ENCODE measurements at regions of chr12 and their contacts with region 1.

Region 1: GRCh38 chr12:8890313-8891085 is 23.8 kb upstream of the PHC1 start:
- H3K4me3 ChIP-seq: peak overlapping the region; percentile 39
- H3K27ac ChIP-seq: no peak overlapping the region
- H3K4me1 ChIP-seq: no peaks in the 10 kb centered on the region
- CTCF ChIP-seq: peak; percentile 52; the same call in 1 of the 2 replicates

Region 2: DNA sequence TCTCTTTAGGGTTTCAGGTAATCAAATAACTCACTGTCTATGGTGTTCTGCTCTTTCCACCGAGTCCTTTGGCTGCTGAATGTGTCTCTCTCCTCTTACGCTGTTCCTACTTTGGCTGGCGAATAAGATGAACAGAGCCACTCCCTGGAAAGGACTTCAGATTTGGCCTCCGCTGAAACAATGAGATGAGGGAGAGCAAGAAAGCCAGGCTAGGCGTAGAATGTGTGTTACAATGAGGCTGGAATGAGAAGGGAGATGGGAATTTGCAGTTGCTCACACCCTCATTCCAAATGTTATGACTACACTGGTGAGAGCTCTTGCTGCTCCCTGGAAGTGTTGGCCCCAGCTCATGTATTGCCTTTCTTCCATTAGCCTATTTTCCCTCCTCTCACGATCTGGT is 227.9 kb before region 1 on chr12 and contains the start of gene MFAP5:
- CTCF ChIA-PET with region 1: interaction called, 15 read pairs
- POLR2A ChIA-PET with region 1: no interaction called
- H3K4me3 ChIP-seq: no peak within 1 kb of the TSS
- H3K27ac ChIP-seq: no peak within 1 kb of the TSS
- H3K4me1 ChIP-seq: no peaks in the 10 kb centered on the region
- CTCF ChIP-seq: no peak

Region 3: GRCh38 chr12:8823565-8824300 is 66.8 kb before region 1 on chr12:
- CTCF ChIA-PET with region 1: interaction called, 18 read pairs
- POLR2A ChIA-PET with region 1: no interaction called
- H3K4me3 ChIP-seq: no peak overlapping the region
- H3K27ac ChIP-seq: no peak overlapping the region
- H3K4me1 ChIP-seq: no peaks in the 10 kb centered on the region
- CTCF ChIP-seq: no peak; the same call in 1 of the 2 replicates

Region 4: DNA sequence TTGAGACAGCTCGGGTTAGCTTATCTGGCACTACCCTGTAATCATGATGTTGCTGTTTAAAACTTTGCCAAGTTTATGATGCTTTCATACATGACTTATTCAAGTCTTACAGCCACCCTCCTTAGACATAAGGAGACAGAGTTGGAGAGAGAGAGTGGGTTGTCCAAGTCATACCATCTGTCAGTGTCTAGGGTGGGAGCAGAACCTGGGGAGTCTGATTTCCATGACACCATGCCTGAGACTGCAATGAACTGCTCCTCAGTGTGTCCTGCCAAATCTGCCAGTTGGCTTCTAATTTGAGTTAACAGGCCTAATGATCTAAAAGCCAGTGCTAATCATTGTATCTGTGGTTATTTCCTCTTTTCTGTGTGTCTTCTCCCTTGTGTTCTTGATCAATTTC is 19.9 kb before region 1 on chr12:
- CTCF ChIA-PET with region 1: interaction called, 13 read pairs
- POLR2A ChIA-PET with region 1: no interaction called
- H3K4me3 ChIP-seq: no peak overlapping the region
- H3K27ac ChIP-seq: no peak overlapping the region
- H3K4me1 ChIP-seq: peaks cover 3% of the 10 kb centered on the region; the same call in 1 of the 2 replicates
- CTCF ChIP-seq: no peak

Region 5: DNA sequence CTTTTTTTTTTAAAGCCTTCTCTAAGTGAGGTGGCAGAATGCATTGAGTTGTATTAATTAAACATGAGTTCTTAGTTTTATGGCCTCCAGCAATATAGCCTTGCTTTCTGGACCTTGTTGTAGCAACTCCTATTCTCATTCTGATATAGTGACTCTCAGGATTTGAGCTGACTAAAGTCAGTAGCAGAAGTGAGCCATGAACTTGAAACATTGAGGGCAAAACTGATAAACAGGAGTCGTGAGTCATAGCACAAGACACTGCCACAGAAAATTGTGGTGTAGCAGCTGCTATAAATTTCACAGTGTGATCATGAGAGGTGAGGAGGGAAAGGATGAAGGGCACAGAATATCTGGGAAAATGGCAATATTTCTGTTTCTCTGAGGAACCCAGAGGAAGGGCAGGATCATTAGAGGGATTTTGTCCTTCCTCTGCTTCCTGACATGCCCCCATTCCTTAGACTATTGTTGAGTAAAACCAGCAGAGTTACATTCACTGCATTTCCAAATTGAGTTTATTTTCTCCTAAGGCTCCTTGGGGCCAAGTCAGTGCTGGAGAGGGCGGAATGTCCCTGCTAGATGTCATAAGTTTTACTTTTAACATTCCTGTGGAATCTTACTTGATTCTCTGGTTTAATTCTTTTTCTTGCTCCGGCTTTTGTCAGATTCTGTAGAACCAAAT is 106.3 kb after region 1 on chr12:
- CTCF ChIA-PET with region 1: no interaction called
- POLR2A ChIA-PET with region 1: no interaction called
- H3K4me3 ChIP-seq: no peak overlapping the region
- H3K27ac ChIP-seq: no peak overlapping the region
- H3K4me1 ChIP-seq: no peaks in the 10 kb centered on the region
- CTCF ChIP-seq: no peak

Region 6: GRCh38 chr12:9049520-9050133 is 159.1 kb after region 1 on chr12:
- CTCF ChIA-PET with region 1: interaction called, 18 read pairs
- POLR2A ChIA-PET with region 1: no interaction called
- H3K4me3 ChIP-seq: no peak overlapping the region
- H3K27ac ChIP-seq: no peak overlapping the region
- H3K4me1 ChIP-seq: no peaks in the 10 kb centered on the region
- CTCF ChIP-seq: no peak